ENCODE measurements at regions of chr9 and their contacts with region 1.

Region 1: GRCh38 chr9:82606492-82607382 is 456.2 kb downstream of the RASEF start:
- DNase-seq: no peak
- ATAC-seq: peak; percentile 86
- H3K4me3 ChIP-seq: no peak overlapping the region
- H3K27ac ChIP-seq: no peak overlapping the region
- H3K4me1 ChIP-seq: no peaks in the 10 kb centered on the region
- H3K27me3 ChIP-seq: peaks cover 2% of the 10 kb centered on the region

Region 2: DNA sequence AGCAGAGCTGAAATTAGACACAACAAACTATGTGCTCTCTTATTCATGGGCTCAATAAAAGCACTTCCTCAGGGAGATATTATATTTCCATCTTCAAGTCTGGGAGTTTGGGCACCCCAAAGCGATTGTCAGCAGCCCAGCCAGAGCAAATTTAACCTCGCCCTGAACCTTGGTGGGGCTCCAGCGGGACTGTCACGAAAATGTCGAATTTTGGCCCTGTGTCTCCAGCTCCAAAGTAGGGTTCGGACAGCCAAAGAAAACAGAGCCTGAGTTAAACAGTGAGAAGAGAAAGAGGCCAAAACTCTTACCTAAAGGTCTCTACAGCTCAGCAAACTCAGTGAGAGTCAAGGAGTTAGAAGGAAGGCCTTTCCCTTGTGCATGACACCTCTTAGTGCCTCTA is 185.2 kb before region 1 on chr9:
- intact Hi-C with region 1: no loop called
- DNase-seq: peak; percentile 47 to 86 (median 82)
- ATAC-seq: peak; percentile 88 to 92
- H3K4me3 ChIP-seq: no peak overlapping the region
- H3K27ac ChIP-seq: no peak overlapping the region
- H3K4me1 ChIP-seq: no peaks in the 10 kb centered on the region
- H3K27me3 ChIP-seq: no peaks in the 10 kb centered on the region

Region 3: DNA sequence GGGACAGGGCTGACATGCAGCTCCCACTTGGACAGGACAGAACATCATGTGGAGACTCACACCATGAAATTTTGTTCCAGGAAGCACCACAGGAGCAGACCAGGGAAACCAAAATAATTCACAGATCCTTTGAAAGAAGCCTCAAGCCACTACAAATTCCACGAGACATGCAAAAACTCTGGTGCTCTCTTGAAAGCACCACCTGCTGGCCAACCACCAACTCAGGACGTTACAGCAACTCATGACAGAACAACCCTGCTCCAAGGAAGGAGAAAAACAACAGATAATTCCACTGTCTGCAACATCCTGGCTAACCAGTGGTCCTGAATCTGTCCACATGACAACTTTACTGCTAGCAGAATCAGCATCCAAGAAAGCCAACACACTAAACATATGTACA is 102.1 kb before region 1 on chr9:
- intact Hi-C with region 1: no loop called
- DNase-seq: no peak
- ATAC-seq: no peak
- H3K4me3 ChIP-seq: no peak overlapping the region
- H3K27ac ChIP-seq: no peak overlapping the region
- H3K4me1 ChIP-seq: no peaks in the 10 kb centered on the region
- H3K27me3 ChIP-seq: no peaks in the 10 kb centered on the region

Region 4: DNA sequence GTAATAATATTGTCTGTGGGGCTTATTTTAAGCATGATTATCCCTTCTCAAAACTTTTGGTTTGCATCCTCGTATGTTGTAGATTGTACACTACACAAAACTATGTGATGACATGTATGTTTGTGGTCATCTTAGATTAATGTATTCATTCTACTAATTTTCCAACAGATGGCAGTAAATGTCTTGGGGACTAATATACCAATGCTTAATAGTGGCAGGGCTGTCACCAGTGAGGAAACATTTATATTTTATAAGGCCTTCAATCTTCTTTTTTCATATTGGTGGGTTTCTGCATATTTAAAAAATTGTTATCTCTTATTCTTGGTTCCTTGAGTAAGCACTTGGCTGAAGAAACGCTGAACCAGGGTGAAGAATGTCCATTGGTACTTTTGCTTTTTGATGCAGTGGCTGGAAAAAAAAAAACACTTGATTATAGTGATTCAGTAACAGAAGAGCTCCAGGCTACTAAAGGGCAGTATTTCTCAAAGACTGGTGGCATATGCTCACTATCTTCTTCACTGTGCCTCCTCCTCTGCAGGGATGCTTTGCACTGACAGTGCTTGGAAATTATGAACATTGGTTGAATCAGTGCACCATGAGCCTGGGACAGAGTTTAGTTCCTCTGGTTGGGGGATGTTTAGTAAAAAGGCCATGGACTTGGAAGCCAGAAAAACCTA is 74.1 kb before region 1 on chr9:
- intact Hi-C with region 1: loop called (anchors 5 to 10 kb)
- DNase-seq: no peak
- ATAC-seq: peak in 1 of 2 donors; percentile 61
- H3K4me3 ChIP-seq: no peak overlapping the region
- H3K27ac ChIP-seq: no peak overlapping the region
- H3K4me1 ChIP-seq: no peaks in the 10 kb centered on the region
- H3K27me3 ChIP-seq: no peaks in the 10 kb centered on the region

Region 5: GRCh38 chr9:82539856-82540579 is 66.7 kb before region 1 on chr9:
- intact Hi-C with region 1: loop called in 3 of 4 experiments (anchors 5 to 10 kb)
- DNase-seq: peak in 1 of 3 donors; percentile 14
- ATAC-seq: no peak
- H3K4me3 ChIP-seq: no peak overlapping the region
- H3K27ac ChIP-seq: no peak overlapping the region
- H3K4me1 ChIP-seq: no peaks in the 10 kb centered on the region
- H3K27me3 ChIP-seq: no peaks in the 10 kb centered on the region

Measured in right cardiac atrium (tissue), 5 donors.